ENCODE measurements at regions of chr13 and their contacts with region 1.

Region 1: GRCh38 chr13:73171926-73172325 is 113.1 kb downstream of the KLF5 start:
- DNase-seq: peak; percentile 67 to 81
- H3K4me3 ChIP-seq: no peak overlapping the region
- H3K4me3 Mint-ChIP-seq: peak overlapping the region; percentile 31
- H3K27ac Mint-ChIP-seq: peak overlapping the region; percentile 97
- H3K4me1 ChIP-seq: peaks cover 82% of the 10 kb centered on the region
- H3K4me1 Mint-ChIP-seq: peaks cover 51% of the 10 kb centered on the region
- H3K27me3 ChIP-seq: no peaks in the 10 kb centered on the region
- H3K27me3 Mint-ChIP-seq: no peaks in the 10 kb centered on the region
- CTCF ChIP-seq: peak in 1 of 2 experiments; percentile 61

Region 2: GRCh38 chr13:73081256-73081915 is 90.5 kb before region 1 on chr13:
- CTCF ChIA-PET with region 1: no interaction called
- POLR2A ChIA-PET with region 1: no interaction called
- intact Hi-C with region 1: no loop called
- DNase-seq: no peak
- H3K4me3 ChIP-seq: no peak overlapping the region
- H3K4me3 Mint-ChIP-seq: no peak overlapping the region
- H3K27ac Mint-ChIP-seq: no peak overlapping the region
- H3K4me1 ChIP-seq: peaks cover 25% of the 10 kb centered on the region
- H3K4me1 Mint-ChIP-seq: peaks cover 15% of the 10 kb centered on the region
- H3K27me3 ChIP-seq: no peaks in the 10 kb centered on the region
- H3K27me3 Mint-ChIP-seq: no peaks in the 10 kb centered on the region
- CTCF ChIP-seq: no peak

Region 3: GRCh38 chr13:73107481-73107880 is 64.4 kb before region 1 on chr13:
- CTCF ChIA-PET with region 1: no interaction called
- POLR2A ChIA-PET with region 1: interaction called, 4 read pairs
- intact Hi-C with region 1: loop called (anchors 1 kb)
- DNase-seq: no peak
- H3K4me3 ChIP-seq: no peak overlapping the region
- H3K4me3 Mint-ChIP-seq: no peak overlapping the region
- H3K27ac Mint-ChIP-seq: no peak overlapping the region
- H3K4me1 ChIP-seq: peaks cover 38% of the 10 kb centered on the region
- H3K4me1 Mint-ChIP-seq: peaks cover 40% of the 10 kb centered on the region
- H3K27me3 ChIP-seq: no peaks in the 10 kb centered on the region
- H3K27me3 Mint-ChIP-seq: no peaks in the 10 kb centered on the region
- CTCF ChIP-seq: no peak

Region 4: DNA sequence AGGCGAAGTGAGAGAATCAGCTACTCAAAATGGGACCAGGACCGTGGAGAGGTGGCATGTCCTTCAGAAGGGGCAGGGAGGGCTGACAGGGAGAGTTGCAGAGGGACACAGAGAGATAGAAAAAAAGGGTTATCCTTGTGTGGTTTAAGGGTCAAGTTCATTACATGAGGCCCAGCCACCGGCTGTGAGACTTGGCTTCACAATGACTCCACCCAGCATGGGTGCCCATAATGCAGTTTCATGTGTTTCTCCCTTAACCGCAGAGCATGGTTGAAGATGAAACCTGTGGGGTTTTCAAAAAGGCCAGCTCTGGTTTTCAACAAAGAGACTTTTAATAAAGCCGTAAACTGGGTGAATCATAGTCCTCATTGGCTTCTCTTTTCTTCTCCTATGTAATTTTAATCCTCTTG is 51.5 kb after region 1 on chr13:
- CTCF ChIA-PET with region 1: no interaction called
- POLR2A ChIA-PET with region 1: no interaction called
- intact Hi-C with region 1: loop called (anchors 2 kb)
- DNase-seq: peak in 1 of 2 experiments; percentile 12
- H3K4me3 ChIP-seq: no peak overlapping the region
- H3K4me3 Mint-ChIP-seq: no peak overlapping the region
- H3K27ac Mint-ChIP-seq: peak overlapping the region; percentile 62
- H3K4me1 ChIP-seq: peaks cover 34% of the 10 kb centered on the region
- H3K4me1 Mint-ChIP-seq: peaks cover 44% of the 10 kb centered on the region
- H3K27me3 ChIP-seq: no peaks in the 10 kb centered on the region
- H3K27me3 Mint-ChIP-seq: no peaks in the 10 kb centered on the region
- CTCF ChIP-seq: no peak

Region 5: GRCh38 chr13:73259061-73260017 is 87.4 kb after region 1 on chr13:
- CTCF ChIA-PET with region 1: no interaction called
- POLR2A ChIA-PET with region 1: no interaction called
- intact Hi-C with region 1: no loop called
- DNase-seq: no peak
- H3K4me3 ChIP-seq: no peak overlapping the region
- H3K4me3 Mint-ChIP-seq: no peak overlapping the region
- H3K27ac Mint-ChIP-seq: peak overlapping the region; percentile 60
- H3K4me1 ChIP-seq: peaks cover 26% of the 10 kb centered on the region
- H3K4me1 Mint-ChIP-seq: peaks cover 40% of the 10 kb centered on the region
- H3K27me3 ChIP-seq: no peaks in the 10 kb centered on the region
- H3K27me3 Mint-ChIP-seq: no peaks in the 10 kb centered on the region
- CTCF ChIP-seq: no peak

Region 6: GRCh38 chr13:73417015-73417623 is 245.2 kb after region 1 on chr13:
- CTCF ChIA-PET with region 1: no interaction called
- POLR2A ChIA-PET with region 1: no interaction called
- intact Hi-C with region 1: loop called (anchors 2 kb)
- DNase-seq: peak in 1 of 2 experiments; percentile 55
- H3K4me3 ChIP-seq: no peak overlapping the region
- H3K4me3 Mint-ChIP-seq: no peak overlapping the region
- H3K27ac Mint-ChIP-seq: no peak overlapping the region
- H3K4me1 ChIP-seq: peaks cover 19% of the 10 kb centered on the region
- H3K4me1 Mint-ChIP-seq: peaks cover 15% of the 10 kb centered on the region
- H3K27me3 ChIP-seq: no peaks in the 10 kb centered on the region
- H3K27me3 Mint-ChIP-seq: no peaks in the 10 kb centered on the region
- CTCF ChIP-seq: peak; percentile 38 to 45

Measured in Caco-2 (cell line).